ENCODE measurements at regions of chr10 and their contacts with region 1.

Region 1: GRCh38 chr10:61284222-61284890 is 168.8 kb downstream of the TMEM26 start:
- DNase-seq: no peak
- ATAC-seq: peak; percentile 81 to 86
- H3K4me3 ChIP-seq: no peak overlapping the region
- H3K27ac ChIP-seq: peak overlapping the region in 3 of 4 donors; percentile 9 to 25 (median 18)
- H3K4me1 ChIP-seq: peaks cover 7 to 11% of the 10 kb centered on the region in 2 donors
- H3K27me3 ChIP-seq: no peaks in the 10 kb centered on the region
- CTCF ChIP-seq: peak; percentile 65 to 86 (median 76)
- POLR2A ChIP-seq: no peak

Region 2: GRCh38 chr10:60816628-60817397 is 467.5 kb before region 1 on chr10:
- in situ Hi-C with region 1: loop called (anchors 5 to 10 kb)
- intact Hi-C with region 1: loop called (anchors 1 kb)
- DNase-seq: peak; percentile 25 to 39
- ATAC-seq: peak; percentile 93 to 94
- H3K4me3 ChIP-seq: peak overlapping the region in 1 of 4 donors; percentile 19
- H3K27ac ChIP-seq: peak overlapping the region in 3 of 4 donors; percentile 14 to 27 (median 19)
- H3K4me1 ChIP-seq: peaks cover 22 to 26% of the 10 kb centered on the region in 2 donors
- H3K27me3 ChIP-seq: no peaks in the 10 kb centered on the region
- CTCF ChIP-seq: peak; percentile 72 to 86 (median 82)
- POLR2A ChIP-seq: no peak

Region 3: DNA sequence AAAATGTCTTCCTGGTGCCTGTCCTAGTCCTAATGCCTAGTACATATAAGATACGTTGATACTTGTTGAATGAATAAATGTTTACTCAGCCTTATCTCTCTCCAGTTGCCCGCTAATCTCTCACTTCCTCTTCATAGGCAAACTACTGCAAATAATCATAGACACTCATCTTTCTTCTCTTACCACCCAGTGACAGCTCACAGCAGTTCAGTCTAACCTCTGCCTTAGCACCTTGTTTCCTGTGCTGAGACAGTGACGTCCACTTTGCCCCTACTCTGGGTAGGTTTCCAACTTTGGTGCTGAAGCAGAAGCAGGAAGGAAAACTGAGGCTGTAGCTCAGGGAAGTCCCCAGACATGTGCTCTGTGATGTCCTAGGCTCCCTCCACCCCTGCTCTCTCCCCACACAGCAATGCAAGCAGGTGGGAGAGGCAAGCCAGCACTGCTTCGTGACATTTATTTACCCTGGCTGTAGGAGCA is 294.9 kb before region 1 on chr10:
- in situ Hi-C with region 1: loop called in 1 of 4 experiments (anchors 25 kb)
- intact Hi-C with region 1: no loop called
- DNase-seq: no peak
- ATAC-seq: no peak
- H3K4me3 ChIP-seq: no peak overlapping the region
- H3K27ac ChIP-seq: no peak overlapping the region
- H3K4me1 ChIP-seq: no peaks in the 10 kb centered on the region
- H3K27me3 ChIP-seq: no peaks in the 10 kb centered on the region
- CTCF ChIP-seq: no peak
- POLR2A ChIP-seq: no peak

Region 4: GRCh38 chr10:61140765-61141392 is 143.5 kb before region 1 on chr10:
- in situ Hi-C with region 1: loop called (anchors 5 to 10 kb)
- intact Hi-C with region 1: loop called (anchors 1 kb)
- DNase-seq: no peak
- ATAC-seq: peak; percentile 69 to 81
- H3K4me3 ChIP-seq: no peak overlapping the region
- H3K27ac ChIP-seq: no peak overlapping the region
- H3K4me1 ChIP-seq: peaks cover 0 to 12% of the 10 kb centered on the region in 2 donors
- H3K27me3 ChIP-seq: no peaks in the 10 kb centered on the region
- CTCF ChIP-seq: peak; percentile 69 to 79 (median 73)
- POLR2A ChIP-seq: no peak

Region 5: GRCh38 chr10:61159253-61159652 is 125.1 kb before region 1 on chr10:
- in situ Hi-C with region 1: no loop called
- intact Hi-C with region 1: loop called (anchors 5 kb)
- DNase-seq: no peak
- ATAC-seq: no peak
- H3K4me3 ChIP-seq: no peak overlapping the region
- H3K27ac ChIP-seq: peak overlapping the region in 1 of 4 donors; percentile 15
- H3K4me1 ChIP-seq: peaks cover 11 to 18% of the 10 kb centered on the region in 2 donors
- H3K27me3 ChIP-seq: no peaks in the 10 kb centered on the region
- CTCF ChIP-seq: no peak
- POLR2A ChIP-seq: no peak